Left lung (tissue), 14 donors: ENCODE measurements at regions of chr14 and their contacts with region 1.

Region 1: GRCh38 chr14:52824507-52824906 is 33.1 kb upstream of the GNPNAT1 start:
- DNase-seq: no peak
- ATAC-seq: no peak
- H3K4me3 ChIP-seq: no peak overlapping the region
- H3K27ac ChIP-seq: no peak overlapping the region
- H3K4me1 ChIP-seq: no peaks in the 10 kb centered on the region
- H3K27me3 ChIP-seq: no peaks in the 10 kb centered on the region
- CTCF ChIP-seq: no peak

Region 2: GRCh38 chr14:52961060-52961639 is 136.6 kb after region 1 on chr14:
- intact Hi-C with region 1: loop called in 1 of 2 experiments (anchors 5 kb)
- DNase-seq: peak in 1 of 4 donors; percentile 51
- ATAC-seq: peak; percentile 99
- H3K4me3 ChIP-seq: no peak overlapping the region
- H3K27ac ChIP-seq: peak overlapping the region in 1 of 2 donors; percentile 45
- H3K4me1 ChIP-seq: peaks cover 3 to 14% of the 10 kb centered on the region in 2 donors
- H3K27me3 ChIP-seq: no peaks in the 10 kb centered on the region
- CTCF ChIP-seq: peak; percentile 39 to 43

Region 3: DNA sequence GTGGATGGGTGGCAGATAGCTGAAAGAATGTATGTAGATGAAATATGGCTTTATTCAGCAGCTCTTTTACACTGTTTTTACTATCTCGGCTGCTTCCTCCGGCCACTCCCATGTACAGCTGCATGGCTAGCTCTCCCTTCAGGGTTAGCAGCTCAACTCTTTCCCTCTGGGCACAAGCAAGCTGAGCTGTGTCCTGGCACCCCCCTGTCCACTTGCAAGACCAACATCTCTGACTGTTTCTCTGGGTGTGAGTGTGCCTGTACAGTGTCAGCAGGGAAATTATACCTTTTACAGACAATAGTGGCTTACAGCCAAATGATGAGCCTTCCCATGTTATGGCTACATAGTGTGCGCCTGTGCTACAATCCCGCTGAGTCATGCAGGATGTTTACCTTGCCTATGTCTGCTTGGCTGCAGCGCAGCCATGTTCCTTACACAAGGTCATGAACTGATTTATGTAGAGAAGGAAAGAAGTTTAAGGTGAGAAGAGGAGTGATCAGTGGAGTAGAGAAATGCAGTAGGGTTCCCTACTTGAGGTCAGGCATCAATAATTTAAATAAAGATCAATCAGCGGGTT is 454.5 kb after region 1 on chr14:
- intact Hi-C with region 1: no loop called
- DNase-seq: no peak
- ATAC-seq: no peak
- H3K4me3 ChIP-seq: no peak overlapping the region
- H3K27ac ChIP-seq: no peak overlapping the region
- H3K4me1 ChIP-seq: no peaks in the 10 kb centered on the region
- H3K27me3 ChIP-seq: no peaks in the 10 kb centered on the region
- CTCF ChIP-seq: no peak